CD8-positive, alpha-beta T cell (primary cell): ENCODE measurements at regions of chr1 and their contacts with region 1.

Region 1: GRCh38 chr1:9724706-9725476 is 73.4 kb downstream of the PIK3CD start:
- DNase-seq: peak; percentile 47 to 84 (median 75)
- ATAC-seq: peak; percentile 47
- H3K4me3 ChIP-seq: no peak overlapping the region
- H3K4me3 Mint-ChIP-seq: peak overlapping the region; percentile 8
- H3K27ac ChIP-seq: peak overlapping the region in 1 of 2 experiments; percentile 16
- H3K27ac Mint-ChIP-seq: peak overlapping the region; percentile 80
- H3K4me1 ChIP-seq: peaks cover 82% of the 10 kb centered on the region
- H3K4me1 Mint-ChIP-seq: peaks cover 71% of the 10 kb centered on the region
- H3K27me3 ChIP-seq: no peaks in the 10 kb centered on the region
- H3K27me3 Mint-ChIP-seq: no peaks in the 10 kb centered on the region
- CTCF ChIP-seq: peak; percentile 97

Region 2: GRCh38 chr1:9615316-9616063 is 109.4 kb before region 1 on chr1:
- CTCF ChIA-PET with region 1: interaction called, 15 read pairs
- POLR2A ChIA-PET with region 1: interaction called, 4 read pairs
- intact Hi-C with region 1: no loop called
- DNase-seq: peak; percentile 28 to 77 (median 58)
- ATAC-seq: peak; percentile 95
- H3K4me3 ChIP-seq: no peak overlapping the region
- H3K4me3 Mint-ChIP-seq: no peak overlapping the region
- H3K27ac ChIP-seq: no peak overlapping the region
- H3K27ac Mint-ChIP-seq: no peak overlapping the region
- H3K4me1 ChIP-seq: no peaks in the 10 kb centered on the region
- H3K4me1 Mint-ChIP-seq: peaks cover 2% of the 10 kb centered on the region
- H3K27me3 ChIP-seq: peaks cover 0 to 3% of the 10 kb centered on the region in 2 experiments
- H3K27me3 Mint-ChIP-seq: peaks cover 7% of the 10 kb centered on the region
- CTCF ChIP-seq: peak; percentile 70

Region 3: GRCh38 chr1:9643351-9644256 is 81.3 kb before region 1 on chr1:
- CTCF ChIA-PET with region 1: interaction called, 3 read pairs
- POLR2A ChIA-PET with region 1: interaction called, 11 read pairs
- intact Hi-C with region 1: no loop called
- DNase-seq: peak in 5 of 9 experiments; percentile 26 to 60 (median 34)
- ATAC-seq: peak; percentile 24
- H3K4me3 ChIP-seq: no peak overlapping the region
- H3K4me3 Mint-ChIP-seq: peak overlapping the region; percentile 66
- H3K27ac ChIP-seq: peak overlapping the region in 1 of 2 experiments; percentile 28
- H3K27ac Mint-ChIP-seq: peak overlapping the region; percentile 88
- H3K4me1 ChIP-seq: peaks cover 75% of the 10 kb centered on the region
- H3K4me1 Mint-ChIP-seq: peaks cover 72% of the 10 kb centered on the region
- H3K27me3 ChIP-seq: no peaks in the 10 kb centered on the region
- H3K27me3 Mint-ChIP-seq: no peaks in the 10 kb centered on the region
- CTCF ChIP-seq: no peak